CD8-positive, alpha-beta T cell (primary cell): ENCODE measurements at regions of chr18 and their contacts with region 1.

Region 1: DNA sequence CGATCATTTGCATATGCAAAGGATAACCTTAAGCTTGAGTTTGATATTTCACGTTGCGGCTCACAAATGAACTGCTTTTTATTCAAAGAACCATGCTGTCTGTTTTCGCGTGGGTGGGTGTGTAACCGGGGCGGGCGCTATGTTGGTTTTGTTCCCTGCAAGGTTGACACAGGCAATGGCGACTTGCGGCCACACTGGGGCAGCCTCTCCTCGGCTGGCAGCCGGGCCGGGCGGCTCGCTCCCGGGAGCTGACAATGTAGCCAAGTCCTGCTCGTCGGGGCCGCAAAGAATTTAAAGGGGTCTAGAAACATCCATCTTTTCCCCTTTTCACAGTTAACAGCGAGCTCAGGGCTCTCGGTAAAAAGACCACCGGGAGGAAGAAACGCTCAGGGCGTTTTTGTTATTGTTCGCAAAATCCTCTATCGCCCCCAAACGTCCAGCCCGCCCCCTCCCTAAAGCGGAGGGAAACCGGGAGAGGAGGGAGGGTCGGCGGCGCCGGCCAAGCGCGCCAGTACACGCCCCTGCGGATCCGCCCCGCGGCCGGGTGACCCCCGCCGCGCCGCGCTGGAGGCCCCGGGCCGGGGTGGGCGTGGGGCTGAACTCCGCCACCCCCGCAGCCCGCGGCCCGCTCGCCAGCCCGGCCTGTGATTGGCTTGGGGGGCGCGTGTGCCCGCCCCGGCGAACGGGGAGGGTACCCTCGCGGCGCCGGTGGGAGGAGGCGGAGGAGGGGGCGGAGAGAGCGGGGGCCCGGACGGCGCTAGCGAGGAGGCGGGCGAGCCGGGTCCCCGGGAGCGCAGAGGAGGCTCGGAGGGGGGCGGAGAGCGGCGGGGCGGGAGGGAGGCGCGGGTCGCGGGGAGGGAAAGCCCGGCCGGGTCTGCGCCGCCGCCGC is at the start of gene NEDD4L:
- DNase-seq: peak; percentile 44 to 87 (median 78)
- ATAC-seq: peak; percentile 71
- H3K4me3 ChIP-seq: peak within 1 kb of the TSS; percentile 65 to 91
- H3K4me3 Mint-ChIP-seq: peak within 1 kb of the TSS; percentile 96
- H3K27ac ChIP-seq: peak within 1 kb of the TSS in 1 of 2 experiments; percentile 53
- H3K27ac Mint-ChIP-seq: peak within 1 kb of the TSS; percentile 70
- H3K4me1 ChIP-seq: peaks cover 15% of the 10 kb centered on the region
- H3K4me1 Mint-ChIP-seq: peaks cover 28% of the 10 kb centered on the region
- H3K27me3 ChIP-seq: no peaks in the 10 kb centered on the region
- H3K27me3 Mint-ChIP-seq: peaks cover 9% of the 10 kb centered on the region
- CTCF ChIP-seq: peak; percentile 38
- total RNA-seq, gene NEDD4L: 10.0 to 10.9 TPM

Region 2: GRCh38 chr18:56638271-56639093 is 1405.3 kb before region 1 on chr18 and contains the start of gene TXNL1:
- CTCF ChIA-PET with region 1: no interaction called
- POLR2A ChIA-PET with region 1: no interaction called
- intact Hi-C with region 1: loop called in 1 of 2 experiments (anchors 5 kb)
- DNase-seq: peak; percentile 97 to 100 (median 99)
- ATAC-seq: peak; percentile 97
- H3K4me3 ChIP-seq: peak within 1 kb of the TSS; percentile 55 to 74
- H3K4me3 Mint-ChIP-seq: peak within 1 kb of the TSS; percentile 98
- H3K27ac ChIP-seq: peak within 1 kb of the TSS; percentile 85
- H3K27ac Mint-ChIP-seq: peak within 1 kb of the TSS; percentile 99
- H3K4me1 ChIP-seq: peaks cover 35% of the 10 kb centered on the region
- H3K4me1 Mint-ChIP-seq: peaks cover 51% of the 10 kb centered on the region
- H3K27me3 ChIP-seq: no peaks in the 10 kb centered on the region
- H3K27me3 Mint-ChIP-seq: no peaks in the 10 kb centered on the region
- CTCF ChIP-seq: no peak
- total RNA-seq, gene TXNL1: 43.3 to 44.8 TPM

Region 3: GRCh38 chr18:57621246-57621604 is 422.5 kb before region 1 on chr18:
- CTCF ChIA-PET with region 1: no interaction called
- POLR2A ChIA-PET with region 1: no interaction called
- intact Hi-C with region 1: loop called in 1 of 2 experiments (anchors 5 kb)
- DNase-seq: peak in 1 of 9 experiments; percentile 3
- ATAC-seq: peak; percentile 11
- H3K4me3 ChIP-seq: peak overlapping the region; percentile 94 to 96
- H3K4me3 Mint-ChIP-seq: peak overlapping the region; percentile 99
- H3K27ac ChIP-seq: peak overlapping the region; percentile 89 to 93
- H3K27ac Mint-ChIP-seq: peak overlapping the region; percentile 97
- H3K4me1 ChIP-seq: peaks cover 12% of the 10 kb centered on the region
- H3K4me1 Mint-ChIP-seq: peaks cover 37% of the 10 kb centered on the region
- H3K27me3 ChIP-seq: no peaks in the 10 kb centered on the region
- H3K27me3 Mint-ChIP-seq: no peaks in the 10 kb centered on the region
- CTCF ChIP-seq: no peak

Region 4: GRCh38 chr18:57881818-57882413 is 161.8 kb before region 1 on chr18:
- CTCF ChIA-PET with region 1: interaction called, 4 read pairs
- POLR2A ChIA-PET with region 1: no interaction called
- intact Hi-C with region 1: loop called in 1 of 2 experiments (anchors 5 kb)
- DNase-seq: peak; percentile 3 to 69 (median 45)
- ATAC-seq: peak; percentile 74
- H3K4me3 ChIP-seq: no peak overlapping the region
- H3K4me3 Mint-ChIP-seq: no peak overlapping the region
- H3K27ac ChIP-seq: no peak overlapping the region
- H3K27ac Mint-ChIP-seq: no peak overlapping the region
- H3K4me1 ChIP-seq: no peaks in the 10 kb centered on the region
- H3K4me1 Mint-ChIP-seq: no peaks in the 10 kb centered on the region
- H3K27me3 ChIP-seq: no peaks in the 10 kb centered on the region
- H3K27me3 Mint-ChIP-seq: peaks cover 6% of the 10 kb centered on the region
- CTCF ChIP-seq: peak; percentile 89

Region 5: DNA sequence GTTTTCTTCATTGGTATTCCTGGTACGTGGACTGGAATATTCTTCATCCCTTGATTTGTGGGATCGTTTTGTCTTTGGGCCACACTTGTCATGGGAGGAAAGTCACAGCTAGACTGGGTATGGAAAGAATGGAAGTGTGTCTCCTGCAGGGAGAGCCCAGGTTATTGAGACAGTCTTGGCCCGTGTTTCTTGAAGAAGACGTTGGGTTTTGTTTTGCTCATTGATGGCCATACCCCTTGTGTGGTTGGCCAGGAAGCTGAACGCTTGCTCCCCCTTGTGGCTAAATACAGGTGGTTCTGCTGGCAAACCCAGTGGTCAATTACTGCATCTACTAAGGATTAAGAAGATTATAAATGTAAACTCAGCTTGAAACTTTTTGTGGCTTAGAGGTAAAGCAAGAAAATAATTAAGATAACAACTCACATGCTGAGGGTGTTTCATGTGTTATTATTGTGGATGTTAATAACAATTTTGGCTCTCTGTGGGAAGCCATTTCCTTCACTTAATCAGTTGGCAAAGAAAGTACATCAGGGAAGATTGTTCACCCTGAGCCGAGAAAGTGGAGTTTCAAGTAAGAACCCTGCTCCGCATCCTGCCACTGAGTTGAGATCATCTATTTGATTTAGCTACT is 92.1 kb after region 1 on chr18:
- CTCF ChIA-PET with region 1: interaction called, 7 read pairs
- POLR2A ChIA-PET with region 1: interaction called, 3 read pairs
- intact Hi-C with region 1: loop called in 1 of 2 experiments (anchors 1 kb)
- DNase-seq: peak in 8 of 9 experiments; percentile 11 to 68 (median 42)
- ATAC-seq: peak; percentile 71
- H3K4me3 ChIP-seq: no peak overlapping the region
- H3K4me3 Mint-ChIP-seq: no peak overlapping the region
- H3K27ac ChIP-seq: no peak overlapping the region
- H3K27ac Mint-ChIP-seq: no peak overlapping the region
- H3K4me1 ChIP-seq: peaks cover 6% of the 10 kb centered on the region
- H3K4me1 Mint-ChIP-seq: peaks cover 15% of the 10 kb centered on the region
- H3K27me3 ChIP-seq: no peaks in the 10 kb centered on the region
- H3K27me3 Mint-ChIP-seq: peaks cover 2% of the 10 kb centered on the region
- CTCF ChIP-seq: peak; percentile 66

Region 6: DNA sequence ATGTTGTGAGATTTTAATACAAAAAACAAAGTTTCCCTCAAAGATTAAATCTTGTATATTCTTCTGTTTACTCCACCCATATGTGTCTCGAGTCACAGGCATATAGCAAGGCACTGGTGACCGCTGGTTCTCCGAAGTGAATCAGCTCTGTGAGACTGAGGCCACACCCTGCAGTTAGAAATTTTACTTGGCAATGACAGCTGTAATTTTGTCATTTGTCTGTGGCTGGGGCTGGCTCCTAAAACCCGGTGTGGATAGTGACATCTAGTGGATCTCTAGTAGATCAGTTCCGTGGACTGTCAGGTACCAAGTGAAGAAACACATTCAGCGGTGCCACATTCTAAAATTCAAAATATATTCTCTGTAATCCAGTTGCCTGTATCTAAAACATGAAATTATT is 278.3 kb after region 1 on chr18:
- CTCF ChIA-PET with region 1: no interaction called
- POLR2A ChIA-PET with region 1: no interaction called
- intact Hi-C with region 1: loop called (anchors 1 to 10 kb)
- DNase-seq: peak; percentile 6 to 70 (median 42)
- ATAC-seq: peak; percentile 83
- H3K4me3 ChIP-seq: no peak overlapping the region
- H3K4me3 Mint-ChIP-seq: no peak overlapping the region
- H3K27ac ChIP-seq: no peak overlapping the region
- H3K27ac Mint-ChIP-seq: peak overlapping the region; percentile 10
- H3K4me1 ChIP-seq: peaks cover 11% of the 10 kb centered on the region
- H3K4me1 Mint-ChIP-seq: peaks cover 7% of the 10 kb centered on the region
- H3K27me3 ChIP-seq: no peaks in the 10 kb centered on the region
- H3K27me3 Mint-ChIP-seq: no peaks in the 10 kb centered on the region
- CTCF ChIP-seq: peak; percentile 34

Region 7: GRCh38 chr18:58386780-58387179 is 343.0 kb after region 1 on chr18:
- CTCF ChIA-PET with region 1: no interaction called
- POLR2A ChIA-PET with region 1: no interaction called
- intact Hi-C with region 1: no loop called
- DNase-seq: peak in 1 of 9 experiments; percentile 35
- ATAC-seq: no peak
- H3K4me3 ChIP-seq: no peak overlapping the region
- H3K4me3 Mint-ChIP-seq: no peak overlapping the region
- H3K27ac ChIP-seq: no peak overlapping the region
- H3K27ac Mint-ChIP-seq: no peak overlapping the region
- H3K4me1 ChIP-seq: no peaks in the 10 kb centered on the region
- H3K4me1 Mint-ChIP-seq: no peaks in the 10 kb centered on the region
- H3K27me3 ChIP-seq: no peaks in the 10 kb centered on the region
- H3K27me3 Mint-ChIP-seq: no peaks in the 10 kb centered on the region
- CTCF ChIP-seq: no peak